Endothelial cell of umbilical vein (primary cell): ENCODE measurements at regions of chr1 and their contacts with region 1.

Region 1: DNA sequence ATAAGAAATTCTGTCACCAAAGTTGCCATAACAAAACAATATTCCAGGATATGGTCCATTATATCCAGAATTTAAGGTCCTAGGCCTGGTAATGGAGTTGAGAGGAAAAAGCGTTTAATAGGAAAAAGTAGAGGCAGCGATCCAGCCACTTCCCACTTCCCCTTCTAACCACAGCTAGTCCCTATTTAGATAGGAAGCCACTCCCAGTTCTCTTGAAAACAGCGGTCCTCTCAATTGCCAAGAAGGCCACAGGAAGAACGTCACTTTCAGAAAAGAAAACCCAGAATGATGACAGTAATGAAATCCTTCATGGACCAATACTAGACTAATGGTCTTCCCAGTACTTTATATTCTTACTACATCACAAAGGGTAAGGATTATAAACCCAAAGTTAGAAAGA is 38.6 kb downstream of the ABL2 start:
- DNase-seq: peak; percentile 67
- H3K4me3 ChIP-seq: no peak overlapping the region
- H3K27ac ChIP-seq: peak overlapping the region; percentile 10
- H3K4me1 ChIP-seq: peaks cover 8% of the 10 kb centered on the region
- H3K27me3 ChIP-seq: no peaks in the 10 kb centered on the region
- CTCF ChIP-seq: no peak
- POLR2A ChIP-seq: no peak

Region 2: DNA sequence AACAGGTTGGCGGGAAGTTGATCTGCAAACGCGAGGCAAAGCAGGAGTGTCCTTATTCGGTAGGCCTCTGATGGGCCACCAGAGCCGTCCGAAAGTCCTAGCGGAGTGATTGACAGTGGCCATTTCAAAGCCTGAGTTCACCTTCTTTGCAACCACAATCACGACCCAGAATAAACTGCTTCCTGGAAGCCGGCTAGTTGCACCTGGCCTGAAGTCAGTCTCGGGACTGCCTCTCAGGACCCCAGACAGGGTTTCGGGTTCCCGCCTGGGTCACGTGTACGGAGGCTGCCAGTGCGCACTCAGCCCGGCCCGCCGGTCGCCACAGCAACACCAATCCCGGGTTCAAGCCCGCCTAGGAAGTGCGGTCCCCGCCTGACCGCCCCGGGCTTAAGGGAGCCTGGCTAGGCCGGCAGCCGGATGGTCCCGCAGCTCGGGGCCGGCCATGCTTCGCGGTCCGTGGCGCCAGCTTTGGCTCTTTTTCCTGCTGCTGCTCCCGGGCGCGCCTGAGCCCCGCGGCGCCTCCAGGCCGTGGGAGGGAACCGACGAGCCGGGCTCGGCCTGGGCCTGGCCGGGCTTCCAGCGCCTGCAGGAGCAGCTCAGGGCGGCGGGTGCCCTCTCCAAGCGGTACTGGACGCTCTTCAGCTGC is 109.1 kb before region 1 on chr1 and contains the start of gene TOR3A:
- CTCF ChIA-PET with region 1: interaction called, 4 read pairs
- POLR2A ChIA-PET with region 1: no interaction called
- dilution Hi-C with region 1: no loop called
- intact Hi-C with region 1: loop called (anchors 1 kb)
- DNase-seq: peak; percentile 89
- H3K4me3 ChIP-seq: peak within 1 kb of the TSS; percentile 68 to 80 (median 77)
- H3K27ac ChIP-seq: peak within 1 kb of the TSS; percentile 62
- H3K4me1 ChIP-seq: peaks cover 14% of the 10 kb centered on the region
- H3K27me3 ChIP-seq: no peaks in the 10 kb centered on the region
- CTCF ChIP-seq: no peak
- POLR2A ChIP-seq: peak; percentile 88
- total RNA-seq, gene TOR3A: 16.7 and 22.4 TPM in 2 replicates

Region 3: GRCh38 chr1:179121159-179121938 is 69.5 kb before region 1 on chr1:
- CTCF ChIA-PET with region 1: interaction called, 54 read pairs
- POLR2A ChIA-PET with region 1: interaction called, 11 read pairs
- dilution Hi-C with region 1: no loop called
- intact Hi-C with region 1: loop called (anchors 1 kb)
- DNase-seq: no peak
- H3K4me3 ChIP-seq: no peak overlapping the region
- H3K27ac ChIP-seq: no peak overlapping the region
- H3K4me1 ChIP-seq: peaks cover 13% of the 10 kb centered on the region
- H3K27me3 ChIP-seq: no peaks in the 10 kb centered on the region
- CTCF ChIP-seq: peak; percentile 25 to 39
- POLR2A ChIP-seq: no peak

Region 4: GRCh38 chr1:179169616-179170467 is 21.0 kb before region 1 on chr1:
- CTCF ChIA-PET with region 1: no interaction called
- POLR2A ChIA-PET with region 1: no interaction called
- dilution Hi-C with region 1: no loop called
- intact Hi-C with region 1: no loop called
- DNase-seq: no peak
- H3K4me3 ChIP-seq: no peak overlapping the region
- H3K27ac ChIP-seq: no peak overlapping the region
- H3K4me1 ChIP-seq: peaks cover 4% of the 10 kb centered on the region
- H3K27me3 ChIP-seq: no peaks in the 10 kb centered on the region
- CTCF ChIP-seq: no peak
- POLR2A ChIP-seq: no peak